WTC11 (cell line): ENCODE measurements at regions of chr7 and their contacts with region 1.

Region 1: GRCh38 chr7:108468246-108468645 is 12.0 kb upstream of the NRCAM start:
- DNase-seq: no peak
- ATAC-seq: peak; percentile 78
- H3K4me3 Mint-ChIP-seq: no peak overlapping the region
- H3K27ac Mint-ChIP-seq: no peak overlapping the region
- H3K4me1 Mint-ChIP-seq: peaks cover 13% of the 10 kb centered on the region
- H3K27me3 Mint-ChIP-seq: no peaks in the 10 kb centered on the region
- CTCF ChIP-seq: no peak

Region 2: DNA sequence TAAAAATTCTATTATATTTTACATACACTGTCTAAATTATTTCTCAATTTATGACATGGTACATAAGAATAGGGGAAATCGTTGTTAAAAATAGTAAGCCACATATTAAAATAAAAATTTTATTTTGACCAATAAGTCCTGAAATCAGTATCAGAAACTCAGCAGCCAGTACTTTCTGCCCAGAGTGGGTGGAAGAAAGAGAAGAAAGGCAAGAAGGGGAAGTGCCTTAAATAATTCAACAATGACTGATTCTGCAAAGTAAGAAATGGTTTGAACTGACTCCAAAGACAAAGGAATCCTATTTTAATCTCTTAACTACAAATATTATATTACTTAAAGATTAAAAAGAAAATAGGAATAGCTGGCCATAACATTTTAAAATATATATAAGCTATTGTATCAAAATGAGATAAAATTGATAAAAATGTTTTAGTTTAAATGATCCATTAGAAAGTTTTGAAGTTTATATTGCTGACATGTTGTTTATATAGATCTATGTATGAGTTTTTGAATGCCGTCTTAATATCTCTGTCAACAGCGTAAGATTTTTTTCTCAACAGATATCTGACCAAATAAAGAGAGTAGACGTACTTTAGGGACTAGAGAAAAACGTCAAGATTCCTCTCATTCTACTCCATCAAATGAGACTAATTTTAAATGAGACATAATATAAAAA is 18.2 kb after region 1 on chr7:
- CTCF ChIA-PET with region 1: no interaction called
- POLR2A ChIA-PET with region 1: no interaction called
- DNase-seq: no peak
- ATAC-seq: no peak
- H3K4me3 Mint-ChIP-seq: no peak overlapping the region
- H3K27ac Mint-ChIP-seq: no peak overlapping the region
- H3K4me1 Mint-ChIP-seq: no peaks in the 10 kb centered on the region
- H3K27me3 Mint-ChIP-seq: no peaks in the 10 kb centered on the region
- CTCF ChIP-seq: no peak

Region 3: DNA sequence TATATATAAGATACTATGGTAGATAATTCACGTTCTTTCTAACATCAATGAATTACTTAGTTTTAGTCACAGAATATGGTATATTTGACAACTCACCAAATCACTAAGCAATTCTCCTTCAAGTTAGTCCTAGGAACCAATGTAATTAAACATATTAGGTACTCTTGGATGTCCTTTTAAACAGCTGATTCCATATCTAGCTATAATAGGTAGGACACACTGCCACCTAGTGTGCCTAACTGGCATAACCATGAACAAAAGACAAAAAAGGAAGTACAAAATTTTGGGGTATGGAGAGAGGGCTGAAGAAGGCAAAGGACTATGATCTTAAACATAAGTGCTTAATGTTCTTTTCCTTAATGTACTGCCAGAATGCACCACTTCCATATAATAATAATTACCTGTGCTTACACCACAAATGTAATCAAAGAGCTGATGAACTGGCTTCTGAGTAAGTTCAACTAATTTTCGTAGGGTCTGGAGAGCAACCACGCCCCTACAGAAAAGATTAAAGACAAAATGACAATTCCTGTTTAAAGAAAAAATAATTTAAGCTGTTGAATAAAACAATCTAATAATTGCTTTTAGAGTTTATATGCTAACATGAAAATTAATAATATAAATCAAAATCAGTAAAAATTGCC is 29.0 kb after region 1 on chr7:
- CTCF ChIA-PET with region 1: interaction called, 15 read pairs
- POLR2A ChIA-PET with region 1: no interaction called
- DNase-seq: peak; percentile 48
- ATAC-seq: peak; percentile 77
- H3K4me3 Mint-ChIP-seq: no peak overlapping the region
- H3K27ac Mint-ChIP-seq: no peak overlapping the region
- H3K4me1 Mint-ChIP-seq: no peaks in the 10 kb centered on the region
- H3K27me3 Mint-ChIP-seq: no peaks in the 10 kb centered on the region
- CTCF ChIP-seq: peak; percentile 75